Sigmoid colon (tissue), 7 donors: ENCODE measurements at regions of chr1 and their contacts with region 1.

Region 1: DNA sequence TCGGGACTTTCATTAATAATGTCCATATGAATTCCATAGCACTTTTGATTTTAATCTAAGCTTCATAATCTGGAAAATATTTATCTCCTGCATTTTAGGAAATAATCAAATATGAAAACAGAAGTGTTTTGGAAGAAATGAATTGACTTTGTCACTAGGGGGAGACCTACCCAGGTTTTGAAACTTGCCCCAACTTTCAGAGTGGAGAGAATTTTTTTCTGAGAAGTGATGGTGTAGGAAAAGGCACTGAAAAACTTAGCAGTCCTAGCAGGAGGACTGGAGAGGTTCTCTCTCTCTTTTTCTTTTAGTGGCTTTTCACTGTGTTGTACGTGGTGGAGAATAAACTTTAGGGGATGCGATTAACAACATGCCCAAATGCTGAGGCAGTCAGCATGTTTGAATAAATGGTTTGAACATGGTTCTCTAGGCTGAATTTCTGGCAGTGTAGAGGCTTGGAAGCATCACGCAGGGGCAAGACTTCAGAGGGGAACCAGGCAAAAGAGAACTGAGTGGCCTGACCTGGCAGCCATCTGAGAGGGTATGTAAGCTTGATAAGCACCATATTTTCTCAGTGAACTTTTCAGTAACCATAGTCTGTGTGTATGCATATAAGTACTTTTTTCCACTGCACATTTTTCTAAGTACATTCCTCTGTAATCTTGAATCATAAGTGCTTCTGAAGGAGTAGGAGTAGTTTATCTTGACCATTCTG is 68.3 kb upstream of the NEK7 start:
- DNase-seq: no peak
- H3K4me3 ChIP-seq: no peak overlapping the region
- H3K27ac ChIP-seq: no peak overlapping the region
- H3K4me1 ChIP-seq: no peaks in the 10 kb centered on the region
- H3K27me3 ChIP-seq: no peaks in the 10 kb centered on the region
- CTCF ChIP-seq: peak in 3 of 4 experiments; percentile 25 to 54 (median 28)
- EP300 ChIP-seq: no peak
- POLR2A ChIP-seq: no peak

Region 2: GRCh38 chr1:198359024-198359653 is 270.6 kb after region 1 on chr1:
- intact Hi-C with region 1: loop called (anchors 5 kb)
- DNase-seq: no peak
- H3K4me3 ChIP-seq: no peak overlapping the region
- H3K27ac ChIP-seq: no peak overlapping the region
- H3K4me1 ChIP-seq: no peaks in the 10 kb centered on the region
- H3K27me3 ChIP-seq: no peaks in the 10 kb centered on the region
- CTCF ChIP-seq: peak in 2 of 4 experiments; percentile 15 to 38
- EP300 ChIP-seq: no peak
- POLR2A ChIP-seq: no peak

Region 3: DNA sequence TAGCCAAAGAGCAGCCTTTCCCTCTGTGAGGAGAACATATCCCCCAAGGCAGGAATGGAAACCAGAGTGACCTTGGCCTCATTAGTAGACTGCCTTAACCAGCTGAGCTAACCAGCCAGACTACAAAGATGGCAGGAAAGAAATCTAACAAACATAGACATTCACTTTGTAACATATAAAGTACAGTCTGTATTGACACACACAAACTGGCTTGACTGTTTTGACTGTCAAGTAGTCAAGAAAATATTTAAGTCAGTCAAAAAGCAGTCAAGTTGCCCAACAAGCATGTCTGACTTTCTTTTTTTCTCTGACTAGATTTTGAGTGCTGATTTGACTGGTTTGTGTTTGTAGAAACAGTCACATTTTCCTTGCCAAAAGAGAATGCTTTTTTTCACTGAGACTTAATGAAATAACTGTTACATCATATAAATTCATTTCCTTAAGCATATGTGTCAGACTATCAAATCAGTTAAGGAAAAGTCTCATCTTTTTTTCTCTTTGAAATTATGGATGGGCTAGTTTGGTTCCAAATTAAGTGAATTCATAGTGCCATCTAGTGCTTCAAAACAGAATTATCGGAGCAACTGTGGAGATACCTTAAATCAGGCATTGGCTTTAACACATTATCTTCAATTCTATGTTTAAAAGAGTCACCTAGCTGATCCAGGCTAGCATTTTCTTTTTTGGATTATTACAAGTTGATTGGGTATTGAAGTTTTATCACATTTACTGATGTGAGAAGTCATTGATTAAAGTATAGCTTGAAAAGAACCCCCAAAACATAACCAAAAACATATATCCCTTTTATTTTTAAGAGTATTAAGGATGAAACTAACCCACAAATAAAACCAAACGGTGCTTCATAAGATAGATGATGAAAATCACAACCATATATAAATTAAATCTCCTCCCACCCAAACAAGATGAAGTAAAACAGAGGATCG is 377.0 kb after region 1 on chr1:
- intact Hi-C with region 1: loop called (anchors 5 kb)
- DNase-seq: no peak
- H3K4me3 ChIP-seq: no peak overlapping the region
- H3K27ac ChIP-seq: no peak overlapping the region
- H3K4me1 ChIP-seq: no peaks in the 10 kb centered on the region
- H3K27me3 ChIP-seq: no peaks in the 10 kb centered on the region
- CTCF ChIP-seq: peak in 3 of 4 experiments; percentile 31 to 51 (median 32)
- EP300 ChIP-seq: no peak
- POLR2A ChIP-seq: no peak